Dorsolateral prefrontal cortex (tissue), 120 donors: ENCODE measurements at regions of chr6 and their contacts with region 1.

Region 1: DNA sequence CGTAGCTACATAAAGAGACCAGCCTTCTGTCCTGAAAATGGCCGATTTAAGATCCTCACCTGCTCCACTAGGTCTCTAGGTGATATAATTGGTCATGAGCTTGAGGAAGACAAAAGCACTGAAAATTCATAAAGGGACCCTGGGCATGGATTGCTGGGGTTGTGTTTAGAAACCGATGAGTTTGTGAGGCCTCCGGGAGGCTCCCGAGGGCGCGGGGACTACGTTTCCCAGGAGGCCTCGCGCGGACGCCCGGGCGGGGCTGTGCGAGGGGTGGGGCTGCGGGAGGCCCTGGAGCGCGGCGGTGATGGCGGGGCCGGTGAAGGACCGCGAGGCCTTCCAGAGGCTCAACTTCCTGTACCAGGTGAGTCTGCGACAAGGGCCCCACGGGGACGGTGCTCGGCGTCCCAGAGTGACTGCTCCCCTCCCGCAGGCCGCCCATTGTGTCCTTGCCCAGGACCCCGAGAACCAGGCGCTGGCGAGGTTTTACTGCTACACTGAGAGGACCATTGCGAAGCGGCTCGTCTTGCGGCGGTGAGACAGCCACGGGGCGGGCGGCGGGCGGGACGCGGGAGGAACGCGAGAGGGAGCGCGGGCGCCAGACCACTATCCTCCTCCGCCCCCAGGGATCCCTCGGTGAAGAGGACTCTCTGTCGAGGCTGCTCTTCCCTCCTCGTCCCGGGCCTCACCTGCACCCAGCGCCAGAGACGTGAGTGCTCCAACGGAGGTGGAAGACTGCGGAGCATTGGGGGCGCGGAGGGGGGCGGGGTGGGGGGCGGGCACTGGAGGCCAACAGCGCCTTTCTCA is at the start of gene RPP21:
- DNase-seq: peak; percentile 76 to 95 (median 88)
- H3K4me3 ChIP-seq: peak within 1 kb of the TSS; percentile 62 to 99 (median 91)
- H3K27ac ChIP-seq: peak within 1 kb of the TSS; percentile 27 to 97 (median 88)
- H3K27me3 ChIP-seq: no peaks in the 10 kb centered on the region
- CTCF ChIP-seq: peak in 36 of 56 donors; percentile 5 to 61 (median 28)
- total RNA-seq, gene RPP21: 25.5 to 57.1 (median 41.0) TPM

Region 2: GRCh38 chr6:30212865-30213666 is 132.0 kb before region 1 on chr6 and contains the start of gene TRIM26:
- intact Hi-C with region 1: loop called in 1 of 2 experiments (anchors 5 kb)
- DNase-seq: peak; percentile 92 to 98 (median 96)
- H3K4me3 ChIP-seq: peak within 1 kb of the TSS; percentile 62 to 100 (median 93)
- H3K27ac ChIP-seq: peak within 1 kb of the TSS; percentile 86 to 99 (median 96)
- H3K27me3 ChIP-seq: no peaks in the 10 kb centered on the region
- CTCF ChIP-seq: peak in 9 of 56 donors; percentile 4 to 29 (median 9)
- total RNA-seq, gene TRIM26: 22.4 to 51.1 (median 31.6) TPM

Region 3: GRCh38 chr6:30326526-30327260 is 18.4 kb before region 1 on chr6 and contains the start of gene TRIM39:
- intact Hi-C with region 1: loop called (anchors 2 kb)
- DNase-seq: peak; percentile 75 to 91 (median 86)
- H3K4me3 ChIP-seq: peak within 1 kb of the TSS; percentile 57 to 97 (median 91)
- H3K27ac ChIP-seq: peak within 1 kb of the TSS; percentile 80 to 99 (median 96)
- H3K27me3 ChIP-seq: no peaks in the 10 kb centered on the region
- CTCF ChIP-seq: peak in 30 of 56 donors; percentile 6 to 57 (median 23)
- total RNA-seq, gene TRIM39: 6.8 to 16.8 (median 11.0) TPM

Region 4: GRCh38 chr6:30357678-30358540 is 12.8 kb after region 1 on chr6:
- intact Hi-C with region 1: no loop called
- DNase-seq: peak in 9 of 10 donors; percentile 57 to 80 (median 66)
- H3K4me3 ChIP-seq: peak overlapping the region; percentile 28 to 70 (median 52)
- H3K27ac ChIP-seq: peak overlapping the region in 35 of 59 donors; percentile 11 to 78 (median 54)
- H3K27me3 ChIP-seq: peaks cover 0 to 38% (median 7%) of the 10 kb centered on the region in 45 donors
- CTCF ChIP-seq: peak; percentile 51 to 87 (median 75)

Region 5: GRCh38 chr6:30556066-30556905 is 211.2 kb after region 1 on chr6 and contains the start of gene GNL1:
- intact Hi-C with region 1: loop called in 1 of 2 experiments (anchors 10 kb)
- DNase-seq: peak; percentile 87 to 95 (median 92)
- H3K4me3 ChIP-seq: peak within 1 kb of the TSS; percentile 69 to 100 (median 95)
- H3K27ac ChIP-seq: peak within 1 kb of the TSS; percentile 73 to 100 (median 97)
- H3K27me3 ChIP-seq: no peaks in the 10 kb centered on the region
- CTCF ChIP-seq: peak in 1 of 56 donors; percentile 17
- total RNA-seq, gene GNL1: 56.1 to 116 (median 87.5) TPM